Caco-2 (cell line): ENCODE measurements at regions of chr13 and their contacts with region 1.

Region 1: DNA sequence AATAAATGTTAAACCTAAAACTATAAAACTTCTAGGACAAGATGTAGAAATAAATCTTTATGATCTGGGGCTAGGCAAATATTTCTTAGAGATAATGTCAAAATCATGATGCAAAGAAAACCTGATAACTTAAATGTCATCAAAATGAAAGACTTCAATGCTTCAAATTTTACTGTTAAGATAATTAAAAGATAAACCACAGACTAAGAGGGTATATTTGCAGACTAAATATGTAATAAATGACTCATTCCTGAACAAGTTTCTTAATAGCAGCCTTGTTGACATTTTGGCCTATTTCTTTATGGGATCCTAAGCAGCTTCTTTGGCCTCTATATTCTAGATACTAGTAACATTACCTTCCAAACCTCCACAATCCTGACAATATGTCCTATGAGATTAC is 2878.3 kb upstream of the PCDH20 start:
- DNase-seq: no peak
- H3K4me3 ChIP-seq: no peak overlapping the region
- H3K4me3 Mint-ChIP-seq: no peak overlapping the region
- H3K27ac Mint-ChIP-seq: no peak overlapping the region
- H3K4me1 ChIP-seq: peaks cover 29% of the 10 kb centered on the region
- H3K4me1 Mint-ChIP-seq: peaks cover 15% of the 10 kb centered on the region
- H3K27me3 ChIP-seq: no peaks in the 10 kb centered on the region
- H3K27me3 Mint-ChIP-seq: no peaks in the 10 kb centered on the region
- CTCF ChIP-seq: no peak

Region 2: GRCh38 chr13:64154514-64154913 is 139.4 kb before region 1 on chr13:
- CTCF ChIA-PET with region 1: no interaction called
- POLR2A ChIA-PET with region 1: no interaction called
- intact Hi-C with region 1: loop called (anchors 10 kb)
- DNase-seq: peak in 1 of 2 experiments; percentile 4
- H3K4me3 ChIP-seq: no peak overlapping the region
- H3K4me3 Mint-ChIP-seq: no peak overlapping the region
- H3K27ac Mint-ChIP-seq: no peak overlapping the region
- H3K4me1 ChIP-seq: no peaks in the 10 kb centered on the region
- H3K4me1 Mint-ChIP-seq: no peaks in the 10 kb centered on the region
- H3K27me3 ChIP-seq: no peaks in the 10 kb centered on the region
- H3K27me3 Mint-ChIP-seq: no peaks in the 10 kb centered on the region
- CTCF ChIP-seq: peak; percentile 14 to 43

Region 3: GRCh38 chr13:64248371-64249065 is 45.4 kb before region 1 on chr13:
- CTCF ChIA-PET with region 1: no interaction called
- POLR2A ChIA-PET with region 1: no interaction called
- intact Hi-C with region 1: loop called (anchors 1 kb)
- DNase-seq: peak; percentile 53 to 54
- H3K4me3 ChIP-seq: no peak overlapping the region
- H3K4me3 Mint-ChIP-seq: peak overlapping the region; percentile 45
- H3K27ac Mint-ChIP-seq: peak overlapping the region; percentile 68
- H3K4me1 ChIP-seq: peaks cover 32% of the 10 kb centered on the region
- H3K4me1 Mint-ChIP-seq: peaks cover 46% of the 10 kb centered on the region
- H3K27me3 ChIP-seq: no peaks in the 10 kb centered on the region
- H3K27me3 Mint-ChIP-seq: no peaks in the 10 kb centered on the region
- CTCF ChIP-seq: no peak

Region 4: GRCh38 chr13:64459778-64460177 is 165.9 kb after region 1 on chr13:
- CTCF ChIA-PET with region 1: no interaction called
- POLR2A ChIA-PET with region 1: no interaction called
- intact Hi-C with region 1: loop called (anchors 10 kb)
- DNase-seq: no peak
- H3K4me3 ChIP-seq: no peak overlapping the region
- H3K4me3 Mint-ChIP-seq: no peak overlapping the region
- H3K27ac Mint-ChIP-seq: no peak overlapping the region
- H3K4me1 ChIP-seq: 0 out of 2 replicates have a peak, but pooled peaks cover 5% of the 10 kb centered on the region
- H3K4me1 Mint-ChIP-seq: peaks cover 16% of the 10 kb centered on the region
- H3K27me3 ChIP-seq: no peaks in the 10 kb centered on the region
- H3K27me3 Mint-ChIP-seq: no peaks in the 10 kb centered on the region
- CTCF ChIP-seq: no peak